ENCODE measurements at regions of chr6 and their contacts with region 1.

Region 1: GRCh38 chr6:165819394-165819793 is 156.4 kb upstream of the PDE10A start:
- DNase-seq: peak; percentile 72

Region 2: DNA sequence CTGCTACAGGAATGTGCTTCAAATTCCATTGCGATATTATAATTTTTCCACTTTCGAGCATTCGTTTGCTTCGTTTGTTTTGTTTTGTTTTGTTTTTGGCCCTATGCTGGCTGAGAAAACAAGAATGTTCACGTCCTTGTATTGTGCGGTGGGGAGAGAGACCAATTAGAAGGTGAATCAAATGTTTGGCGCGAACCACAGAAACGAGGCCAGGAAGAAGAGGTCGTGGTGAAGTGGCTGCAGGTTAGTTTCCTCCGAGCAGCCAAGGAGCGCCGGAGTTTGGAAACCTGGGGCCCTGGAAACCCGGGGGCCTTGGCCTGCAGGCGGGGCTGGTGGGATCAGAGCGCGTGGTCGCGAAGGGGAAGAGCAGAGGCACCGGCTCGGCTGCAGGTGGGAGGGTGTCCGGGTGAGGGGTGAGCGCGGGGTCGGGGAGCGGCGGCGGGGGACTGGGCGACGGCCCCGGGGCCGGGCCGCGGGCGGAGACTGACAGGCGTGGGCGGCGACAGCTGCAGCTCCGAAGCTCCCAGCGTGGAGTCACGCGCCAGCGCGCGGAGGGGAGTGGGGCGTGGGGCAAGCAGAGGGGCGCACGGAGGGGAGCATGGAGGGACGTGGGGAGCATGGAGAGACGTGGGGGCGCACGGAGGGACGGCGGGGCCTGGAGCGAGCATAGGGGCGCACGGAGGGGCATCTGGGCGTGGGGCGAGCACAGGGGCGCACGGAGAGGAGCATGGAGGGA is 14.9 kb before region 1 on chr6:
- intact Hi-C with region 1: loop called in 1 of 2 experiments (anchors 1 kb)
- DNase-seq: no peak